PC-9 (cell line): ENCODE measurements at regions of chr1 and their contacts with region 1.

Region 1: DNA sequence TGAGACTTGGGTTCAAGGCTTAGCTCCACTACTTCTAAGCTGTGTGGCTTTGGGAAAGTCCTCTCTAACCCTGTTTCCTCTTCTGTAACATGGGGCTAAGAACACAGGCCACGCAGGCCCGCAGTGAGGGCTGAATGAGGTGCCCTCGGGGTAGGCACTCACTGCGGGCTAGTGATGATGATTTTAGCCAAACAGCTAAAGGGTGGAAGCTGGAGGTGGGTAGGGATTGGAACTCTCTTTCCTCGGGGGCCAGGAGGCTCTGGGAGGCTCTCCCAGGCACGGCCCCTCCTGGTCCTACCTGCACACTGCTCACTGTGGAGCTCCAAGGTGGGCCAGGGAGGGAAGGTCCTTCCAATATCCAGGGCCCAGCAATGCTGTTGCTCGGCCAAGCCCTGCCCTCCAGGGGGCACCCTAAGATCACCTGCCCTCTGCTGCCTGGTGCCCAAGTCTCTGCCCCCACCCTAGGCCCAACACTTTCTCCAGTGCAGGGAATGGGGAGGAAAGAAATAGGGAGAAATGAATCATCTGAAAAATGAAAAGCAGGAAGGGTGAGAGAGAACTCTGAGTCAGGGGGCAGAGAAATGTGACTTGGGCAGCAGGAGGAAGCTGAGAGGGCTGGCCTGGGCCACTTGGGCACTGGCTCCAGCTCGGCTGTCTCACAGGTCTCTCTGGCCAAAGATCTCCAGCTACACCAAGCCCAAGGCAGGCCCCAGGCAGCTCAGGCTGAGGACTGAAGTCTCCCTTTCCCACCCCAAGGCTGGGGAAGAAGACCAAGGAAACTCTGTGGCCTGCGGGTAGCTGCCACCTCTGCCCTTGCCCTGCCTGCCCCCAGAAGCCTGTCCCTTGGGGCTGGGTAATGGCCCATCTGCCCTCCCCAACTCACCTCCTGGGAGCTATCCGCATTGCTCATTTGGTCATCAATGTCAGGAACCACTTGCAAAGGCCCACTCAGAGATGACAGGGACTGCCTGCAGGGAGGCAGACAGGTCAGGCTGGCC is 19.3 kb upstream of the EVA1B start:
- DNase-seq: peak; percentile 88 to 89
- H3K4me3 ChIP-seq: no peak overlapping the region
- H3K27ac ChIP-seq: peak overlapping the region; percentile 75
- H3K4me1 ChIP-seq: peaks cover 20% of the 10 kb centered on the region
- H3K27me3 ChIP-seq: no peaks in the 10 kb centered on the region
- CTCF ChIP-seq: peak; percentile 88

Region 2: GRCh38 chr1:35001743-35002142 is 1341.0 kb before region 1 on chr1:
- CTCF ChIA-PET with region 1: no interaction called
- POLR2A ChIA-PET with region 1: no interaction called
- intact Hi-C with region 1: no loop called
- DNase-seq: no peak
- H3K4me3 ChIP-seq: no peak overlapping the region
- H3K27ac ChIP-seq: no peak overlapping the region
- H3K4me1 ChIP-seq: no peaks in the 10 kb centered on the region
- H3K27me3 ChIP-seq: no peaks in the 10 kb centered on the region
- CTCF ChIP-seq: no peak

Region 3: DNA sequence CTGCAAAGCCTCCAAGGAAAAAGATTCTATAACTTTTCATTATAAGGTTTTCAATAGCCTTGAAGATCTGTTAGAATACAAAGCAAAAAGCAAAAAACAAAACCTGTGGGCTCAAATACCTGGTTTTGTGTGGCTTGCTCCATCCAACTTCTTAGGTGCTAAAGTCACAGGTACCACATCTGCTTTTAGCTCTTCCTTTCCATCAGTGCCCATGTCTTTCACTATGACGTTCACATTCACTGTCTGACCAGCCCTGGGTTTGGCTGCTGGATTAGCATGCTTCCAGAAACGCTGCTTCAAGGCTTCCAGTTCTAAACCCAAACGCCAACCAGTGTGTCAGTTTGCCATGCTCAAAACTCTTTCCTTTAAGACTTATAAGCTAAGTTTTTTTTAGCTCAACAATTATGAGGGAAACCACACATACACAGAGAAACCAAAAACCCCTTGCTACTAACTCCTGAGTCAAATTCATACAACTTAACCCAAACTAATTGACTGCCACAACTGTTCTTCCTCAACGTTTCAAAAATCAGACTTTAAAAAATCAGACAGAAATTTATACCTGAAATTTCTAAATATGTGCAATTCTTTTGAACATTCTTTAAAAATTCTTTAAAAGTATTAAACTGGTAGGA is 589.0 kb before region 1 on chr1:
- CTCF ChIA-PET with region 1: no interaction called
- POLR2A ChIA-PET with region 1: no interaction called
- intact Hi-C with region 1: no loop called
- DNase-seq: no peak
- H3K4me3 ChIP-seq: no peak overlapping the region
- H3K27ac ChIP-seq: no peak overlapping the region
- H3K4me1 ChIP-seq: no peaks in the 10 kb centered on the region
- H3K27me3 ChIP-seq: no peaks in the 10 kb centered on the region
- CTCF ChIP-seq: no peak

Region 4: DNA sequence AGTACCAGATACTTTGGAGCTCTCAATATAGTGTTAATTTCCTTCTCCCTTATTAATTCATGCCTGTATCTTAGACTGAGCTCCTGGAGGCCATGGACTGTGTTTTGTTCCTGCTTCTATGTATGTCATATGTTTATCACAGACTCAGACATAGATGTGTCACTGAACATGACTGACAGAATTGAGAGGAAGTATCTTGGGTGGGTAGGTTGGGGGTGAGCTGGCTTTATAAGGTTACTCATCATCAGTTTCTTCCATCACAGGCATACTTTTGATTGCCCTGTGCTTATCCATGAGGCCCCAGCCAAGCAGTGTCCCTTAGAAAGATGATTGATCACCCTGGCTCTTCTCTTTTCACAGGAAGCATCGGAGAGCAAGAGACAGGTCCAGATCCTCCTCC is 42.3 kb before region 1 on chr1:
- CTCF ChIA-PET with region 1: interaction called, 10 read pairs
- POLR2A ChIA-PET with region 1: no interaction called
- intact Hi-C with region 1: no loop called
- DNase-seq: peak in 1 of 2 experiments; percentile 60
- H3K4me3 ChIP-seq: no peak overlapping the region
- H3K27ac ChIP-seq: peak overlapping the region; percentile 89
- H3K4me1 ChIP-seq: peaks cover 32% of the 10 kb centered on the region
- H3K27me3 ChIP-seq: no peaks in the 10 kb centered on the region
- CTCF ChIP-seq: no peak

Region 5: GRCh38 chr1:36385410-36386257 is 42.9 kb after region 1 on chr1 and contains the start of gene STK40:
- CTCF ChIA-PET with region 1: interaction called, 16 read pairs
- POLR2A ChIA-PET with region 1: no interaction called
- intact Hi-C with region 1: no loop called
- DNase-seq: peak; percentile 97 to 98
- H3K4me3 ChIP-seq: peak within 1 kb of the TSS; percentile 98
- H3K27ac ChIP-seq: peak within 1 kb of the TSS; percentile 99
- H3K4me1 ChIP-seq: peaks cover 33% of the 10 kb centered on the region
- H3K27me3 ChIP-seq: no peaks in the 10 kb centered on the region
- CTCF ChIP-seq: no peak
- total RNA-seq, gene STK40: 42.9 and 59.2 TPM in 2 replicates

Region 6: DNA sequence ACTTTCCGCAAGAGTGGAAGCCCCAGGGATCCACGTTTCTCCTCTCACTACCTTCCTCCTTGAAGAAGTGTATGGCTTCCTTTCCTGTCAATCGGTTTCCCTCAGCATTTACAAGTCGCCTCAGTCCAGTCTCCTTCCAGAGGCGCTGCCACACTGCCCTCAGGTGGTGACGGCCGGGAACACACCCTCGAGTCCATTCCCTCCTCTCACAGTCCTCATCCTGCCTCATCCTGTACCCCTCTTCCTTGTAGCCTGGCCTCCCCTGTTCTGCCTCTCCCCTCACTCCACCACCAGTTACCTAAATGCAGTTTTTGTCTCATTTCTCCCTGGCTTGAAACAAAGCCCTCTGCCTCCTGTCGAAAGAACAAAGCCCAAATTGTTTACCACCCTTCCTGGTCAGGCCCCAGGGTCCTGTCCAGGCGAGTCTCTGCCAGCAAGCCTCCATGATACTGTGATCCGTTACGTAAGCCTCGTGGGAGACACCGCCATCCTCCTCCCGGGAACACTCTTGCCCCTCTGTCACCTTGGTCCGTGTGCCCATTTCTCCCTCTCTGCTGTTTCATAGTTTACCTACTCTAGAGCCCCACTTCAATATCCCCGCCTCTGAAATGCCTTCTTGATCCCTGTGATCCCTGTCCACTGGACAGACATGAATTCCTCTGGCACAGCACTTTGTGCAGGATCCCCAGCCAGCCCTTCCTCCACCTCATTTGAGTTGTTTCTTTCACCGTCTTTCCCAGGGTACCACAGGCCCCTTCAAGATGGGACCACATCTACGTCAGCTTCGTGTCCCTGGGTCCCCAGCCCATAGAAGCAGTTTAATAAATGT is 78.3 kb after region 1 on chr1:
- CTCF ChIA-PET with region 1: interaction called, 9 read pairs
- POLR2A ChIA-PET with region 1: no interaction called
- intact Hi-C with region 1: loop called (anchors 1 kb)
- DNase-seq: peak; percentile 72 to 93
- H3K4me3 ChIP-seq: no peak overlapping the region
- H3K27ac ChIP-seq: no peak overlapping the region
- H3K4me1 ChIP-seq: peaks cover 23% of the 10 kb centered on the region
- H3K27me3 ChIP-seq: no peaks in the 10 kb centered on the region
- CTCF ChIP-seq: peak; percentile 91

Region 7: DNA sequence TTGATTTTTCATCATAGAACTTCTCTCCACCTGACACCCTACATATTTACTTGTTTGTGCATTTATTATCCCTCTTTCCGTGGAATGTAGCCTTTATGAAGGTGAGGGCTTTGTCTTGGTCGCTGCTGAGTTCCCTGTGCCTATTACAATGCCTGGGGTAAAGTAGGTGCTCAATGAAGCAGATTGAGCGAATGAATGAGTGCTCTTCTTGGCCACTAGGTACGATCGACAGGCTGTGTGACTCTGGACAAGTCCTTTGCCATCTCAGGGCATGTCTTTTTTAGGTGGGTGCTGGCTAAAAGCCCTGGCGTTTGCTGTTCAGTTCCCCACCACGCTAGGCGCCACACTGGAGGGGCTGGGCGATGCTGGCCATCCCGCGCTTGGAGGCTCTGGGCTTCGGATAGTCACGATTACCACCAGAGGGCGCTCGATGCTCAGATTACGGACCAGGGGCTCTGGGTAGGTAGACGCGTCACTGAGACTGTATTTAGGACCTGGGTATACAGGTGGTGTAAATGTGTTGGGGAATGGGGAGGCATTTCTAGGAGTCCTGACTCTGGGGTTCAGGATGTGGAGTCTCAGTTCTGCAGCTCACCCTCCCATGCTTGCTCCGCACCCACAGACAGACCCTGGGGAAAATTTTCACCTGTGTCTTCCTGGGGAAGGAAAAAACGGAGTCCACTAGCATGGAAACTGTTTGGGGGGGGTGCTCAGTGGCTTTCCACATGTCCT is 211.0 kb after region 1 on chr1:
- CTCF ChIA-PET with region 1: no interaction called
- POLR2A ChIA-PET with region 1: no interaction called
- intact Hi-C with region 1: loop called (anchors 5 kb)
- DNase-seq: peak; percentile 46 to 73
- H3K4me3 ChIP-seq: no peak overlapping the region
- H3K27ac ChIP-seq: no peak overlapping the region
- H3K4me1 ChIP-seq: no peaks in the 10 kb centered on the region
- H3K27me3 ChIP-seq: peaks cover 87% of the 10 kb centered on the region
- CTCF ChIP-seq: peak; percentile 90

Region 8: DNA sequence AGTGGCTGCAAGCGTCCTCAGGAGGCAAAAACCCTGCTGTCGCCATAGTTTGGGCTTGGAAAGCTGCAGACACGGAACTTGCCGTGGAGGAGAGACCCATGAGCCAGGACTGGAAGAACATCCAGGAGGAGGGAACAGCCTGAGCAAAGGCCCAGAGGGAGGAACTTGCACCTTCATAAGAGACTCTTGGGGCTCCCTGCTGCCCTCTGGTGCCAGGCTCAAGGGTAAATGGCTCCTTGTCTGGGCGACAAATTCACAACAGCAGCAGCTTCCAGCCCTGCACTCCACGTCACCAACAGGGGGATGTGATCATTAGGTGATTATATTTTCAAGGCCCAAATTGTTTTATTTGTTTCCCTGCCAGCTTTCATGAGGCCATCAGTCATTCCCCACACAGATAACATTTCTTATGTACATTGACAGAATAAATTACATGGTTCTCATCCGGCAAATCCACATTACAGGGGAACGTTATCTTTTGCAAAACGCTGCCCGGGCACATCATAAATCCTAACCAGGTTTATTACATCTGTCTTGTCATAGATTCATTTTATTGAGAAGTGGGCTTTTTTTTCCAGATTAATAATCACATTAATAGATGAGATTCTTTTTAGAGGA is 834.6 kb after region 1 on chr1:
- CTCF ChIA-PET with region 1: no interaction called
- POLR2A ChIA-PET with region 1: no interaction called
- intact Hi-C with region 1: loop called (anchors 5 kb)
- DNase-seq: peak in 1 of 2 experiments; percentile 40
- H3K4me3 ChIP-seq: no peak overlapping the region
- H3K27ac ChIP-seq: no peak overlapping the region
- H3K4me1 ChIP-seq: no peaks in the 10 kb centered on the region
- H3K27me3 ChIP-seq: peaks cover 14% of the 10 kb centered on the region
- CTCF ChIP-seq: peak; percentile 53; the same call in 1 of the 2 replicates